CD4-positive, alpha-beta memory T cell (primary cell): ENCODE measurements at regions of chr1 and their contacts with region 1.

Region 1: GRCh38 chr1:35192853-35193664 is at the start of gene SFPQ:
- DNase-seq: peak; percentile 97 to 99 (median 98)
- H3K4me3 ChIP-seq: peak within 1 kb of the TSS; percentile 43 to 61
- H3K4me3 Mint-ChIP-seq: peak within 1 kb of the TSS; percentile 87 to 98 (median 96)
- H3K27ac ChIP-seq: peak within 1 kb of the TSS; percentile 91
- H3K27ac Mint-ChIP-seq: peak within 1 kb of the TSS; percentile 96 to 100 (median 99)
- H3K4me1 ChIP-seq: peaks cover 39% of the 10 kb centered on the region
- H3K4me1 Mint-ChIP-seq: peaks cover 33 to 58% (median 42%) of the 10 kb centered on the region in 4 donors
- H3K27me3 ChIP-seq: no peaks in the 10 kb centered on the region
- H3K27me3 Mint-ChIP-seq: no peaks in the 10 kb centered on the region
- total RNA-seq, gene SFPQ: 321 to 334 TPM

Region 2: DNA sequence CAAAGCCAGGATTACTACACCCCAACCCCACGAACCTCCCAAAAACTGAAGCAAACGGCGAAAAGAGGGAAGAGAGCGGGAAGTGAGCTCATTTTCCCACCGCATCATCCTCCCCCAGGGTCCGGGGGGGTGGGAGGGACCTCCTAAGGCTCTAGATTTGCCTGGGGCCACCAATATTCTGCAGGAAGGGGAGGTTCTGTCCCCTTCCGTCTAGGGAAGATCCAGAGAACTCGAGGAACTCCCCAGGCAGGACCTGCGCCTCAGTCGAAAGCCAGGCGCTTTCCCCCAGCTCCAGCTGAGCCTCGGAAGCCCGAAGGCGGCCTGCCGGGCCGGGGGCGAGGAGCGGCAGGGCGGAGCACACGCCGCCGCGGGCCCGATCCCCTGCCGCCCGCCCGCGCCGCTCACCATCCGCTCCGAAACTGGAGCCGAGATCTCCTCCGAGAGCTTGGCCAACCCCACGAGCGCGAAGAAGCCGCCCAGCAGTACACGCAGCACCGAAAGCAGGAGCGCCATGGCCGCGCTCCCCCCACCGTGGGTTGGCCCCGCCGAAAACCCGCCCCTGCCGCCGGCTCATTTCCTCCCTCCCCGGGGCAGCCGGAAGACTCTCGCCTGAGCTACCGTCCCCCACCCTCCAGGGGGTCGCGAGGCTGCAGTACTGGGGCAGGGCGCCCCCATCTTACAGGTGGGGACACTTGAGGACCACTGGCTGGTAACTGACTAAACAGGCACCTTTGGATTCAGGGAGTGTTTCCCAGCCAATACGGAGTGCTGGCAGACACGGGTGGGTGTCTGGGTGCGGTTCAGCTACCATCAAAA is 208.1 kb before region 1 on chr1 and contains the start of gene TMEM35B:
- CTCF ChIA-PET with region 1: interaction called, 3 read pairs
- POLR2A ChIA-PET with region 1: interaction called, 11 read pairs
- intact Hi-C with region 1: loop called (anchors 5 kb)
- DNase-seq: peak; percentile 77 to 80 (median 80)
- H3K4me3 ChIP-seq: peak within 1 kb of the TSS; percentile 48 to 88
- H3K4me3 Mint-ChIP-seq: peak within 1 kb of the TSS; percentile 95 to 100 (median 99)
- H3K27ac ChIP-seq: peak within 1 kb of the TSS; percentile 81
- H3K27ac Mint-ChIP-seq: peak within 1 kb of the TSS; percentile 95 to 99 (median 98)
- H3K4me1 ChIP-seq: peaks cover 27% of the 10 kb centered on the region
- H3K4me1 Mint-ChIP-seq: peaks cover 20 to 59% (median 39%) of the 10 kb centered on the region in 4 donors
- H3K27me3 ChIP-seq: no peaks in the 10 kb centered on the region
- H3K27me3 Mint-ChIP-seq: no peaks in the 10 kb centered on the region
- total RNA-seq, gene TMEM35B: 51.7 to 54.2 TPM

Region 3: DNA sequence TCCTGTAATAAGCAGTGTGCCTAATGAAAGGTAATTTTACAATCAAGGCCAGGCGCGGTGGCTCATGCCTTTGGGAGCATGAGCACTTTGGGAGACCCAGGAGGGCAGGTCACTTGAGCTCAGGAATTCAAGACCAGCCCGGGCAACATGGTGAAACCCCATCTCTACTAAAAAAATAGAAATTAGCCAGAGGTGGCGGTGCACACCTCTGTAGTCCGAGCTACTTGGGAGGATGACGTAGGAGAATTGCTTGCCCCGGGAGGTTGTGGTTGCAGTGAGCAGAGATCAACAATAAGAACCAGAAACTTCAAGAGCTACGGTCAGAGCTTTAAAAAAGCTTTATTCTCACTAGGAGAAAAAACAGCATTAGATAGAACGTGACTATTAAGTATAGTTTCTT is 35.2 kb before region 1 on chr1:
- CTCF ChIA-PET with region 1: no interaction called
- POLR2A ChIA-PET with region 1: no interaction called
- intact Hi-C with region 1: no loop called
- DNase-seq: no peak
- H3K4me3 ChIP-seq: no peak overlapping the region
- H3K4me3 Mint-ChIP-seq: no peak overlapping the region
- H3K27ac ChIP-seq: no peak overlapping the region
- H3K27ac Mint-ChIP-seq: no peak overlapping the region
- H3K4me1 ChIP-seq: no peaks in the 10 kb centered on the region
- H3K4me1 Mint-ChIP-seq: peaks cover 0 to 3% (median 0%) of the 10 kb centered on the region in 4 donors
- H3K27me3 ChIP-seq: no peaks in the 10 kb centered on the region
- H3K27me3 Mint-ChIP-seq: peaks cover 3% of the 10 kb centered on the region in 2 donors

Region 4: DNA sequence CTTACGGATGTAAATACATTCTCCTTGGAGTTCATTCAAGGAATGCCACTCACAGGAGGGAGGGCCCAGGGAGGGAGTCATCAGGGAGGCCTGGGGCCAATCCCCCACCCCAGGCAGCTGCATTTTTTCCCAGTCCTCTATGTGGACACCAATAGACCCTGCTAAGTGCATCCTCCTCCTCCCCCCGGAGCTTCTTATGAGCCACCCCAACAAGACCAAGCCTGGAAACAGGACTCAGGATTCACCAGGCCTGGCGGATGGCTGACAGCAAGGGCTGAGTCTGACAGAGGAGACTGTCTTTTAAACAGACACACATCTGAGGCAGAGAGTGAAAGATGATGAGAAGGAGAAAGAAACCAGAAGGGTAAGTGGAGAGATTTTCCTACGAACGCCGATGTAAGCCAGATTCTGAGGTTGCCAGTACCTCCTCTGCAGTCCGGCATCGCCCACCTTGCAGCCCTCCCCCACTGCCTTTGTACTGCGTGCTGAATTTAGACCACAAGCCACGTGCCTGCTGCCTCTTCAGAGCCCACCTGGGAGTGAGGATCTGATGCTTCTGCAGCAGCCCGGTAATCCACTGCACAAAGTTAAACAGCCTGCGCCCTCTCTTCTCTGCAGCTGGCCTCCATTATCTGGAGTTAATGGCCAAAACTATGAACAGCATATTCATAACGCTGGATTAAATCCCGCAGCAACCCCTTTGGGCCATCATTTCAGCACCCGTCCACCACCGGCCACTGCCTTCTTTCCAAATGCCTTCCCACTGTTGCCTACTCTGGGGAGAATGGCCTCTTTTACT is 17.5 kb after region 1 on chr1:
- CTCF ChIA-PET with region 1: no interaction called
- POLR2A ChIA-PET with region 1: no interaction called
- intact Hi-C with region 1: no loop called
- DNase-seq: no peak
- H3K4me3 ChIP-seq: no peak overlapping the region
- H3K4me3 Mint-ChIP-seq: no peak overlapping the region
- H3K27ac ChIP-seq: no peak overlapping the region
- H3K27ac Mint-ChIP-seq: peak overlapping the region in 2 of 7 donors; percentile 42 to 46
- H3K4me1 ChIP-seq: no peaks in the 10 kb centered on the region
- H3K4me1 Mint-ChIP-seq: peaks cover 0 to 4% (median 0%) of the 10 kb centered on the region in 4 donors
- H3K27me3 ChIP-seq: no peaks in the 10 kb centered on the region
- H3K27me3 Mint-ChIP-seq: no peaks in the 10 kb centered on the region

Region 5: GRCh38 chr1:35220976-35221375 is 27.9 kb after region 1 on chr1:
- CTCF ChIA-PET with region 1: no interaction called
- POLR2A ChIA-PET with region 1: no interaction called
- intact Hi-C with region 1: no loop called
- DNase-seq: peak in 4 of 5 donors; percentile 4 to 10 (median 8)
- H3K4me3 ChIP-seq: no peak overlapping the region
- H3K4me3 Mint-ChIP-seq: no peak overlapping the region
- H3K27ac ChIP-seq: no peak overlapping the region
- H3K27ac Mint-ChIP-seq: no peak overlapping the region
- H3K4me1 ChIP-seq: no peaks in the 10 kb centered on the region
- H3K4me1 Mint-ChIP-seq: no peaks in the 10 kb centered on the region
- H3K27me3 ChIP-seq: no peaks in the 10 kb centered on the region
- H3K27me3 Mint-ChIP-seq: peaks cover 0 to 2% of the 10 kb centered on the region in 2 donors

Region 6: DNA sequence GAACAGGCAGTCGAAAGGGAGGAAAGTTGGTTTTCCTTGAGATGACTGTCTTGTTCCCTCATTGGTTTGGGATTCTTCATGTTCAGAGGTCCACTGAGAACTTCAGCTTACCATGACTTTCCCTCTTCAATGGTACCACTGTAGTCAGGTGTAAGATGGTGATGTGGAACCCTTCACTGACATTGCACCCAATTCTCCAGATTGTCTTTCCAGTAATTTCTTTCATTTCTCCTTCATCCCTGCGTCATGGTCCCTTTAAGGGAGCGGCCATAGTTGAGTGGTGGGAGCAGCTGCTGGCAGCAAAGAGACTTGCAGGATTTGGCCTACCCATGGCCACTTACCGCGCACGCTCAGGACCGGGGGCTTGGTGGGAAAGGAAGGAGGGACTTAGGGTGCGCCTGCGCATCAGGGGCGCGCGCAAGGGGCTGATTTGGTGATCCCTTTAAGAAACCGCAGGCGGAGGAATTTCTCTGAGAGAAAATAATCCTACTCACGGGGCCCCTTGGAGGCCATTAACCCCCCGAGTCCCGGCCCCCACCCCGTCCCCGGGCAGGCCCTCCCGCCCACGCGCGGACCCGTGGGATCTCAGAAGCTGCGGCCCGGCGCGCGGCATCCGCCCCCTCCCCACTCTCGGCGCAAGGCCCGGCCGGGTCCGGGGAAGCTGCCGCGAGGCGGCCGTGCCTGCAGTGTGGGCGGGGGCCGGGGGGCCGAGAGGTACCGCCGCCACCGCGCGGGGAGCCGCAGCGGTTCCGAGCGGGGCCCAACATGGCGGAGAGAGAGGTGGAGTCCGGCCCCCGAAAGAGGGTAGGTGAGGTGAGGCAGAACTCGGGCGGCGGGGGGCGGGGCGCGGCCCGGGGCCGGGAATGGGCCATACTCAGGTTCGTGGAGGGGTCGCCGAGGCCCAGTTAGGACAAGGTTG is 75.5 kb after region 1 on chr1 and contains the start of gene ZMYM4:
- CTCF ChIA-PET with region 1: no interaction called
- POLR2A ChIA-PET with region 1: interaction called, 3 read pairs
- intact Hi-C with region 1: loop called (anchors 1 kb)
- DNase-seq: peak; percentile 85 to 93 (median 90)
- H3K4me3 ChIP-seq: peak within 1 kb of the TSS; percentile 44 to 57
- H3K4me3 Mint-ChIP-seq: peak within 1 kb of the TSS; percentile 89 to 95 (median 90)
- H3K27ac ChIP-seq: peak within 1 kb of the TSS; percentile 67
- H3K27ac Mint-ChIP-seq: peak within 1 kb of the TSS; percentile 84 to 95 (median 92)
- H3K4me1 ChIP-seq: peaks cover 20% of the 10 kb centered on the region
- H3K4me1 Mint-ChIP-seq: peaks cover 23 to 36% (median 29%) of the 10 kb centered on the region in 4 donors
- H3K27me3 ChIP-seq: no peaks in the 10 kb centered on the region
- H3K27me3 Mint-ChIP-seq: peaks cover 2 to 3% of the 10 kb centered on the region in 2 donors
- total RNA-seq, gene ZMYM4: 41.8 to 41.9 TPM

Region 7: DNA sequence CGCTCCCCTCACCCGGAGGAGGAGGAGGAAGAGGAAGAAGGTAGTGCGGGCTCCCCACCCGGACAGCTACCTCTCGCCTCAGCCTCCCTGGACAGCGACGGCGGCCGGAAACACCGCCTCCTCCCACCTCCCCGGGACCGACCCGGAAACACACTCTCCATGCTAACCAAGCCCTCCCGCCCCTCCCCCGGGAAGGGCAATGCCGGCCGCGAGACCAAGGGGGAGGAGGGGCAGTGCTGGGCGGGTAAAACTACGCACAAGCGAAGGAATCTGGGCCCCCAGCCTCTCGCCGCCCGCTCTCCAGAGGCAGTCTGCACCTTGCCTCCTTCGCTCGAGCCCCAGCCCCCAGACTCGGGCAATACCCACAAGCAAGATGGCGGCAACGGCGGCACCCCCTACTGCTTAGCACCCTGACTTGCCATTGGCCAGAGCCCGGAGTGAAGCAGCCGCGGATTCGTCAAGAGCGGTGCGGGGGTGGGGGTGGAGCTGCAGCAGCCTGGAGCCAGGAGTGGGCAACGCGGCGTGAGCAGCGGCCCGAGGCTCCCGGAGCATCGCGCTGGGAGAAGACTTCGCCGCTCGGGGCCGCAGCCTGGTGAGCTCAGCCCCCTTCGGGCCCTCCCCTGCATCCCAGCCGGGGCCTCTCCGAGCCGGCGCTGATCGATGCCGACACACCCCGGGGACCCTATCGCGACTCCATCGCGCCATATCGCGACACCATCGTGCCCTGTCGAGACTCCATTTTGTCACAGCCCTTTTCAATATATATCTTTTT is 364.4 kb after region 1 on chr1 and contains the starts of genes KIAA0319L and NCDN:
- CTCF ChIA-PET with region 1: no interaction called
- POLR2A ChIA-PET with region 1: interaction called, 3 read pairs
- intact Hi-C with region 1: loop called (anchors 5 kb)
- DNase-seq: peak; percentile 93 to 97 (median 95)
- H3K4me3 ChIP-seq: peak within 1 kb of the TSS; percentile 92 to 100
- H3K4me3 Mint-ChIP-seq: peak within 1 kb of the TSS; percentile 94 to 99 (median 97)
- H3K27ac ChIP-seq: peak within 1 kb of the TSS; percentile 70
- H3K27ac Mint-ChIP-seq: peak within 1 kb of the TSS; percentile 95 to 100 (median 96)
- H3K4me1 ChIP-seq: peaks cover 52% of the 10 kb centered on the region
- H3K4me1 Mint-ChIP-seq: peaks cover 37 to 77% (median 48%) of the 10 kb centered on the region in 4 donors
- H3K27me3 ChIP-seq: no peaks in the 10 kb centered on the region
- H3K27me3 Mint-ChIP-seq: no peaks in the 10 kb centered on the region
- total RNA-seq, gene KIAA0319L: 79.4 to 82.9 TPM
- total RNA-seq, gene NCDN: 29.7 to 32.2 TPM